Heart left ventricle (tissue), 16 donors: ENCODE measurements at regions of chr15 and their contacts with region 1.

Region 1: GRCh38 chr15:101251830-101252820 is at the start of gene CHSY1:
- DNase-seq: peak; percentile 94 to 96 (median 96)
- ATAC-seq: peak; percentile 83 to 90 (median 90)
- H3K4me3 ChIP-seq: peak within 1 kb of the TSS; percentile 64 to 99 (median 86)
- H3K27ac ChIP-seq: peak within 1 kb of the TSS; percentile 87 to 97 (median 90)
- H3K4me1 ChIP-seq: peaks cover 0 to 63% (median 45%) of the 10 kb centered on the region in 12 donors
- H3K27me3 ChIP-seq: no peaks in the 10 kb centered on the region
- CTCF ChIP-seq: peak in 8 of 12 donors; percentile 21 to 53 (median 39)
- POLR2A ChIP-seq: peak; percentile 18 to 88
- total RNA-seq, gene CHSY1: 8.7 to 41.3 (median 11.1) TPM

Region 2: GRCh38 chr15:100902436-100903167 is 349.5 kb before region 1 on chr15:
- intact Hi-C with region 1: loop called in 1 of 10 experiments (anchors 10 kb)
- DNase-seq: peak; percentile 78 to 83 (median 79)
- ATAC-seq: peak; percentile 77 to 96 (median 92)
- H3K4me3 ChIP-seq: peak overlapping the region in 9 of 12 donors; percentile 22 to 44 (median 31)
- H3K27ac ChIP-seq: peak overlapping the region; percentile 36 to 84 (median 72)
- H3K4me1 ChIP-seq: peaks cover 0 to 41% (median 17%) of the 10 kb centered on the region in 12 donors
- H3K27me3 ChIP-seq: peaks cover 0 to 6% (median 0%) of the 10 kb centered on the region in 9 donors
- CTCF ChIP-seq: no peak
- POLR2A ChIP-seq: no peak

Region 3: GRCh38 chr15:101127506-101128076 is 124.5 kb before region 1 on chr15:
- intact Hi-C with region 1: loop called in 7 of 10 experiments (anchors 2 to 10 kb)
- DNase-seq: peak; percentile 78 to 87 (median 82)
- ATAC-seq: peak; percentile 89 to 97 (median 94)
- H3K4me3 ChIP-seq: peak overlapping the region in 1 of 12 donors; percentile 4
- H3K27ac ChIP-seq: peak overlapping the region; percentile 49 to 97 (median 72)
- H3K4me1 ChIP-seq: peaks cover 2 to 70% (median 16%) of the 10 kb centered on the region in 12 donors
- H3K27me3 ChIP-seq: peaks cover 0 to 3% (median 0%) of the 10 kb centered on the region in 9 donors
- CTCF ChIP-seq: no peak
- POLR2A ChIP-seq: no peak

Region 4: DNA sequence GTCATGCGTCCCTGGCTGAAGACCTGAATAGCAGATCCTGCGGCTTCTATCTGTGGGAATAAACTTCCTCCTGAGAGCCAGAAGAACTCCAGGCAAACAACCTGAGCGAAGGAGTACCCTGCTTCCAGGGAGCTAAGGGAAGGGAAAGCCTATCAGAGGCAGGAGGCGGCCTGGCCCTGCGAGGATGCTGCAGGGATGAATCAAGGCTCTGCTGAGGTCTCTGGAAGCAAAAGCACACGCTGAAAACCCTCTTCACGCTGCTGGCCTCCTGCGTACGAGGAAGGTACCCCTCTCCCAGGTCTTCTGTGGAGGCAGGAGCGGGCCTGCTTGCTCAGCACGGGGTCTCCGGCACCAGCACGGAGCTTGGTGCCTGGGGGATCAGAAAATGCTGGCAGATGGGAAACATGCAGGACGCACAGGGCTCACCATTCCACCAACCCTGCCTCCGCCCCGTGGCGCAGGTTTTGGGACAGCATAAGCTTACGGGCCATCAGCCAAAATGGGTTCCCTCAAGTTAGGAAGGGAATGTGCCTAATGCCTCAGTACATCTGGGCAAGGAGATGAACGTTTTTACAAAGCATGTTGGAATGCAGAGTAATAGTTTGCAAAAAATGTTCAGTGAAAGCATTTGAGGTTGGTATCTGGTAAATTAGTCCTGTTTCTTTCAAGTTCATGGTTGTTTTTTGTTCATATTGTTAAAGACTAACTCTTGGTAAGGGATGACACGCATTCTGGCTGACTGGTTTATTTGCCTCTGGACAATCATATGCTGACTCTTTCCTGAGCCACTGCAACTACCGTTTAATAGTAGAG is 72.6 kb before region 1 on chr15:
- intact Hi-C with region 1: loop called in 4 of 10 experiments (anchors 2 to 10 kb)
- DNase-seq: no peak
- ATAC-seq: no peak
- H3K4me3 ChIP-seq: no peak overlapping the region
- H3K27ac ChIP-seq: peak overlapping the region in 2 of 12 donors; percentile 7 to 31
- H3K4me1 ChIP-seq: peaks cover 0 to 78% (median 36%) of the 10 kb centered on the region in 12 donors
- H3K27me3 ChIP-seq: no peaks in the 10 kb centered on the region
- CTCF ChIP-seq: no peak
- POLR2A ChIP-seq: no peak

Region 5: GRCh38 chr15:101207867-101208288 is 44.2 kb before region 1 on chr15:
- intact Hi-C with region 1: no loop called
- DNase-seq: no peak
- ATAC-seq: peak in 3 of 4 donors; percentile 40 to 75 (median 62)
- H3K4me3 ChIP-seq: no peak overlapping the region
- H3K27ac ChIP-seq: peak overlapping the region in 2 of 12 donors; percentile 27 to 84
- H3K4me1 ChIP-seq: peaks cover 8 to 100% (median 59%) of the 10 kb centered on the region in 12 donors
- H3K27me3 ChIP-seq: no peaks in the 10 kb centered on the region
- CTCF ChIP-seq: no peak
- POLR2A ChIP-seq: no peak

Region 6: GRCh38 chr15:101294731-101295606 is 42.8 kb after region 1 on chr15 and contains the start of gene SNRPA1:
- intact Hi-C with region 1: no loop called
- DNase-seq: peak; percentile 98 to 100 (median 99)
- ATAC-seq: peak; percentile 76 to 96 (median 92)
- H3K4me3 ChIP-seq: peak within 1 kb of the TSS; percentile 73 to 99 (median 93)
- H3K27ac ChIP-seq: peak within 1 kb of the TSS; percentile 85 to 98 (median 96)
- H3K4me1 ChIP-seq: peaks cover 4 to 36% (median 27%) of the 10 kb centered on the region in 12 donors
- H3K27me3 ChIP-seq: no peaks in the 10 kb centered on the region
- CTCF ChIP-seq: no peak
- POLR2A ChIP-seq: peak; percentile 29 to 76
- total RNA-seq, gene SNRPA1: 17.6 to 44.3 (median 28.6) TPM

Region 7: DNA sequence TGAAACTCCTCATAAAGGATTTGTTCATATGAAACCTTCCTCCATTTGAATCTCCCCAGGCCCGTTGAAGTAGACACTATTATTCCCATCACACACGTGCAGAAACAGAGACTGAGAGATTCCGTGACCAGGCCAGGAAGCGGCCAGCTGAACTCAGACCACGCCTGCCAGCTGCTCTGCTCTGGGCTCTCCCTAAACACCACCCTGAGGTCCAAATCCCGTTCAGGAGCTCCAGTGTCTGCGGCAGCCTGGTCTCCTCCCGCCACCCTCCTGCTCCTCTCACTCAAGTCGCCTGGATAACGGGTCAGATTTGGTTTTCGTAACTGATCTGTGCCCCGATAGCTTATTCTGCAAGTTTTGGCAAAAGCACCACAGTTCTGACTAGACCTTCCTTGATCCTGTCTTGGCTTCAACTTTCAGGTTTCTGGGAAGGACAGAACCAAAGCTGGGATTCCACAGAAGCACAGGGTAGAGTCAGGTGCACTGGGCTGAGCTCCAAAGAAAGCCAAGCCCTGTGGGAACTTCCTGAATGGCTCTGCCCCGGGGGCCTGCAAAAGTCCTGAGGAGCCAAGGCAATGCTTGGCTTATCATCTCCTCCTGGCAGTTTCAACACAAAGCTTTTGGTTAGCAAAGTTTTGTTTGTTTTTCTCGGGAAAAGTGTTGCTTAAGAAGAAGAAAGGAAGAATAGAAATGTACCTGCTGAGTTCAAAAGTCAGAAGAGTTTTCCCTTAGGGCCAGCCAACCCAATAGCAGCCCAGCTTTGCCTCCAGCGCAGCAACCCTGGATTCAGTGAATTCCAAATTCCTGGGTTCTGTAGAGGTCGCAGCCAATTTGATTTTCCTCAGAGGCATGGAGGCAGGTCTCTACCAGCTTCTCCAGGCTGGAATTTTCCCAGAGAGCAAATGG is 96.8 kb after region 1 on chr15:
- intact Hi-C with region 1: no loop called
- DNase-seq: no peak
- ATAC-seq: peak in 3 of 4 donors; percentile 57 to 68 (median 65)
- H3K4me3 ChIP-seq: no peak overlapping the region
- H3K27ac ChIP-seq: no peak overlapping the region
- H3K4me1 ChIP-seq: peaks cover 0 to 17% (median 2%) of the 10 kb centered on the region in 12 donors
- H3K27me3 ChIP-seq: no peaks in the 10 kb centered on the region
- CTCF ChIP-seq: no peak
- POLR2A ChIP-seq: no peak

Region 8: DNA sequence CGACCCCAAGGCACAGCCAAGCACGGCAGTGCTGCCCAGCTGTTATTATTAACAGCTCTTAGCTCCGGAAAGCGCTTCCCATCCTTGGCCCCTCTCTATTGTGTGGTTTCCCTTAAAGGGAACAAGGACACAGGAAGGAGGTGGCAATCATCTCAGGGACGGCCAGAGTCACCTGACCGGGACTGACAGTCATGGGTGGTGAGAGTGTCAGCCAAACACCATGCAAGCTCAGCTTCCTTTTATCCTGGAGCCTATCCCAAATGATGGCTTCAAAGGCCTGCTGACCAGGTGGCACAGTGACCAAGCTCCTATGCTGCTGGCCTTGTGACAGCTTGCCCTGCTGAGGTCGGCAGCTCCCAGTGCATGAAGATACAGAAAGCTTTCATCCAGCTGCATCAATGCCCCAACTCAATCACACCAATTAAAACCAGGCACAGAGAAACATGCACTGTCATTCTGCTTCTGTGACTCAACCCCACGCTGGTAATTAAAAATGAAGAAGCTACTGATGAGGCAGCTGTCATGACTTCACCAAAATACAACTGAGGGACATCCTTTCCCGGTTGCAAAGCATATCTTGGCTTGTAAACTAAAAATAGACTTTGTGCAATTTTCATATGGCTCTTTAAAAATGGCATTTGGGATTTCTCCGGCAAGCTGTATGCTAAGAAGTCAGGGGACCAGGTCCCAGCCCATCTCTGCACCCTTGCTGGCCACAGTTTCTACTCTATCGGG is 203.3 kb after region 1 on chr15:
- intact Hi-C with region 1: no loop called
- DNase-seq: peak in 2 of 5 donors; percentile 52 to 59
- ATAC-seq: peak; percentile 19 to 36 (median 28)
- H3K4me3 ChIP-seq: no peak overlapping the region
- H3K27ac ChIP-seq: peak overlapping the region; percentile 8 to 71 (median 39)
- H3K4me1 ChIP-seq: peaks cover 2 to 56% (median 37%) of the 10 kb centered on the region in 12 donors
- H3K27me3 ChIP-seq: no peaks in the 10 kb centered on the region
- CTCF ChIP-seq: no peak
- POLR2A ChIP-seq: no peak